ENCODE measurements at regions of chr12 and their contacts with region 1.

Region 1: GRCh38 chr12:11015775-11016430 is 6.5 kb downstream of the TAS2R19 start:
- DNase-seq: no peak
- ATAC-seq: no peak
- H3K4me3 ChIP-seq: no peak overlapping the region
- H3K27ac ChIP-seq: no peak overlapping the region
- H3K4me1 ChIP-seq: no peaks in the 10 kb centered on the region
- H3K27me3 ChIP-seq: no peaks in the 10 kb centered on the region
- CTCF ChIP-seq: no peak
- EP300 ChIP-seq: no peak
- POLR2A ChIP-seq: no peak
- RAD21 ChIP-seq: no peak

Region 2: GRCh38 chr12:11071414-11071813 is 55.5 kb after region 1 on chr12:
- CTCF ChIA-PET with region 1: no interaction called
- POLR2A ChIA-PET with region 1: no interaction called
- RAD21 ChIA-PET with region 1: no interaction called
- SMC1A ChIA-PET with region 1: no interaction called
- in situ Hi-C with region 1: loop called (anchors 5 kb)
- intact Hi-C with region 1: loop called (anchors 1 kb)
- DNase-seq: no peak
- ATAC-seq: no peak
- H3K4me3 ChIP-seq: no peak overlapping the region
- H3K27ac ChIP-seq: no peak overlapping the region
- H3K4me1 ChIP-seq: no peaks in the 10 kb centered on the region
- H3K27me3 ChIP-seq: no peaks in the 10 kb centered on the region
- CTCF ChIP-seq: no peak
- EP300 ChIP-seq: no peak
- POLR2A ChIP-seq: no peak
- RAD21 ChIP-seq: no peak

Region 3: GRCh38 chr12:11246489-11246888 is 230.6 kb after region 1 on chr12:
- CTCF ChIA-PET with region 1: no interaction called
- POLR2A ChIA-PET with region 1: no interaction called
- RAD21 ChIA-PET with region 1: no interaction called
- SMC1A ChIA-PET with region 1: no interaction called
- in situ Hi-C with region 1: no loop called
- intact Hi-C with region 1: no loop called
- DNase-seq: no peak
- ATAC-seq: no peak
- H3K4me3 ChIP-seq: no peak overlapping the region
- H3K27ac ChIP-seq: no peak overlapping the region
- H3K4me1 ChIP-seq: no peaks in the 10 kb centered on the region
- H3K27me3 ChIP-seq: no peaks in the 10 kb centered on the region
- CTCF ChIP-seq: no peak
- EP300 ChIP-seq: no peak
- POLR2A ChIP-seq: no peak
- RAD21 ChIP-seq: no peak

Measured in GM12878 (cell line).